ENCODE measurements at regions of chr12 and their contacts with region 1.

Region 1: GRCh38 chr12:2064071-2064507 is 11.3 kb downstream of the CACNA1C start:
- DNase-seq: no peak
- ATAC-seq: peak in 3 of 4 donors; percentile 28 to 44 (median 30)
- H3K4me3 ChIP-seq: peak overlapping the region in 6 of 12 donors; percentile 1 to 37 (median 18)
- H3K27ac ChIP-seq: peak overlapping the region in 11 of 12 donors; percentile 18 to 91 (median 62)
- H3K4me1 ChIP-seq: peaks cover 0 to 77% (median 32%) of the 10 kb centered on the region in 12 donors
- H3K27me3 ChIP-seq: no peaks in the 10 kb centered on the region
- CTCF ChIP-seq: no peak
- POLR2A ChIP-seq: no peak

Region 2: DNA sequence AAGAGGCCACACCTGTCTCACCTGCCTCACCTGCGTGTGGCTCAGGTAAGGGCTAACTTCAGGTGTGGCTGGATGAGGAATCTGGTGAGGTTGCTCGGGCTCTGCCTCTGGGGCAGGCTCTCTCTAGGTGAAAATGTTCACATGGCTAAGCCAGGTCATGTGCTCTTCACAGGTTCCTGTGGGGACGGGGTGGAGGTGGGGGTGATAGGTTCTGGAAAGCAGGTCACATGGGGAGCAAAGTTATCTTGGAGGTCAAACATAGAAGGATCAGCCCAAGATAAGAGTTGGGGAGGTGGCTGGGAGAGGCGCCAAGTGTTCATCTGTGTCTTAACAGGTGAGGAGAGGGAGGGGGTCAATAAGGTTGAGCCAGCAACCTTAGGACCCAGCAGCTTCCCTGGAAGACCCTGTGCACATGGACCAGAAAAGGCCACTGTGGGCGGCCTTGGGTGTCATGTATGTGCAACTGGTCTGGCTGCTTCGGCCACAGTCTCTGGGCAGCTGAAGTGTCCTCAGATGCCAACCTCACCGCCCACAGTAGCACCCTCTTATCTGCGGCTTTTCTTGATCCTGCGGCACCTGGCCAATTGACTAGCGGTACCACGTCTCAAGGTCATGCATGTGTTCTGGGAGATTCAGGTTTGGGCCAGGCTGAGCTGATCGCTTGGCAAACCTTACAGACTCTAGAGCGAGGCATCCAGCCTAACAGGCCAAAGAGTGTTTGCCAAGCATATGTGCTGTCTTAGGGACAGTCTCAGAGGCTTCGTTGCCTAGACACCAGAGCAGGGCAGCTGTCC is 49.2 kb after region 1 on chr12:
- intact Hi-C with region 1: loop called in 1 of 10 experiments (anchors 5 kb)
- DNase-seq: peak; percentile 63 to 90 (median 73)
- ATAC-seq: peak; percentile 77 to 84 (median 80)
- H3K4me3 ChIP-seq: no peak overlapping the region
- H3K27ac ChIP-seq: peak overlapping the region; percentile 60 to 86 (median 80)
- H3K4me1 ChIP-seq: peaks cover 3 to 90% (median 52%) of the 10 kb centered on the region in 12 donors
- H3K27me3 ChIP-seq: no peaks in the 10 kb centered on the region
- CTCF ChIP-seq: no peak
- POLR2A ChIP-seq: no peak

Region 3: GRCh38 chr12:2179953-2180736 is 116.1 kb after region 1 on chr12:
- intact Hi-C with region 1: loop called in 1 of 10 experiments (anchors 10 kb)
- DNase-seq: peak; percentile 51 to 91 (median 81)
- ATAC-seq: peak; percentile 80 to 89 (median 88)
- H3K4me3 ChIP-seq: no peak overlapping the region
- H3K27ac ChIP-seq: peak overlapping the region; percentile 56 to 90 (median 78)
- H3K4me1 ChIP-seq: peaks cover 9 to 70% (median 46%) of the 10 kb centered on the region in 12 donors
- H3K27me3 ChIP-seq: no peaks in the 10 kb centered on the region
- CTCF ChIP-seq: no peak
- POLR2A ChIP-seq: no peak

Measured in heart left ventricle (tissue), 16 donors.